Psoas muscle (tissue), 8 donors: ENCODE measurements at regions of chr3 and their contacts with region 1.

Region 1: GRCh38 chr3:126245811-126246727 is 65.7 kb upstream of the ALDH1L1 start:
- DNase-seq: peak; percentile 66 to 77
- ATAC-seq: peak; percentile 77 to 96 (median 89)
- H3K4me3 ChIP-seq: no peak overlapping the region
- H3K27ac ChIP-seq: no peak overlapping the region
- H3K4me1 ChIP-seq: no peaks in the 10 kb centered on the region
- H3K27me3 ChIP-seq: no peaks in the 10 kb centered on the region
- CTCF ChIP-seq: peak; percentile 58

Region 2: GRCh38 chr3:126287536-126288241 is 41.6 kb after region 1 on chr3:
- intact Hi-C with region 1: no loop called
- DNase-seq: peak; percentile 67 to 87
- ATAC-seq: peak; percentile 85 to 91 (median 88)
- H3K4me3 ChIP-seq: peak overlapping the region; percentile 69
- H3K27ac ChIP-seq: peak overlapping the region; percentile 88
- H3K4me1 ChIP-seq: peaks cover 13% of the 10 kb centered on the region
- H3K27me3 ChIP-seq: no peaks in the 10 kb centered on the region
- CTCF ChIP-seq: no peak

Region 3: GRCh38 chr3:126389112-126389793 is 143.2 kb after region 1 on chr3:
- intact Hi-C with region 1: loop called (anchors 2 to 5 kb)
- DNase-seq: peak; percentile 91 to 97
- ATAC-seq: peak; percentile 95 to 98 (median 96)
- H3K4me3 ChIP-seq: peak overlapping the region; percentile 59
- H3K27ac ChIP-seq: peak overlapping the region; percentile 91
- H3K4me1 ChIP-seq: peaks cover 5% of the 10 kb centered on the region
- H3K27me3 ChIP-seq: peaks cover 0 to 4% (median 0%) of the 10 kb centered on the region in 3 donors
- CTCF ChIP-seq: peak; percentile 96

Region 4: GRCh38 chr3:126394575-126395228 is 148.6 kb after region 1 on chr3 and contains the start of gene CFAP100:
- intact Hi-C with region 1: loop called (anchors 2 to 5 kb)
- DNase-seq: peak in 1 of 2 donors; percentile 57
- ATAC-seq: peak; percentile 36 to 57 (median 45)
- H3K4me3 ChIP-seq: peak within 1 kb of the TSS; percentile 54
- H3K27ac ChIP-seq: no peak within 1 kb of the TSS
- H3K4me1 ChIP-seq: no peaks in the 10 kb centered on the region
- H3K27me3 ChIP-seq: peaks cover 0 to 7% (median 0%) of the 10 kb centered on the region in 3 donors
- CTCF ChIP-seq: no peak
- total RNA-seq, gene CFAP100: not detected